Activated CD8-positive, alpha-beta T cell treated with anti-CD3 and anti-CD28 coated beads, Interleukin-2, amount 10 ng/mL, durations not matched to agents 7 days and 5 days (primary cell): ENCODE measurements at regions of chr9 and their contacts with region 1.

Region 1: GRCh38 chr9:132768932-132769905 is 99.0 kb downstream of the GTF3C4 start:
- DNase-seq: peak; percentile 81
- ATAC-seq: peak; percentile 72
- H3K4me3 Mint-ChIP-seq: peak overlapping the region; percentile 98
- H3K27ac Mint-ChIP-seq: peak overlapping the region; percentile 98
- H3K4me1 Mint-ChIP-seq: peaks cover 22% of the 10 kb centered on the region
- H3K27me3 Mint-ChIP-seq: peaks cover 14% of the 10 kb centered on the region

Region 2: DNA sequence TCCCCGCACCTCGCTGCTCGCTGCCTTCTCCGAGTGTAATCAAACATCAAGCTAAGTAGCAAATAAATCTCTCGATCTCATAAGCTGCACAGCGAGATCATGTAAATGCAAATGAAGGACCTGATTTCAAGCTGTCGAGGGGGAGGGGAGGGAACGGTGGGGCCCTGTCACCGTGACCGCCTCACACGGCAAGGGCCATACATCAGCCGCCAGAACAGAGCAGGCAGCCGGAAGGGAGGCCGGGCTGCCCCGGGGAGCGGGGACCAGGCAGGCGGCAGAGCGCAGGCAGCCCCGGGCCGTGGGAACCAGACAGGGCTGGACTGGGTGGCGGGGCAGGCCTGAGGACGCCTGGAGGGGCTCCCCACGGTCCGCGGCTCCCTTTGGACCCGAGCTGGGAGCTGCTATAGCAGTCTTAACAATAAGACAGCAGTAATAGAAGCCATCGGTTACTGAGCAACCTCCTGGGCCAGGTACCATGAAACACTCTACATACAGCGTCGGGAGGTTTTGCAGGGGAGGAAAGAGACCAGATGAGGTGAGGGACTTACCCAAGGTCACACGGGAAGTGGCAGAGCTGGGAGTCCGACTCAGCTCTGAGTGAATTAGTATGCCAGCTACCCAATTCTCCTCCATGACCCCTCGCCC is 282.4 kb before region 1 on chr9:
- CTCF ChIA-PET with region 1: no interaction called
- POLR2A ChIA-PET with region 1: interaction called, 10 read pairs
- DNase-seq: peak; percentile 79
- ATAC-seq: peak; percentile 91
- H3K4me3 Mint-ChIP-seq: peak overlapping the region; percentile 60
- H3K27ac Mint-ChIP-seq: peak overlapping the region; percentile 98
- H3K4me1 Mint-ChIP-seq: peaks cover 34% of the 10 kb centered on the region
- H3K27me3 Mint-ChIP-seq: peaks cover 48% of the 10 kb centered on the region

Region 3: DNA sequence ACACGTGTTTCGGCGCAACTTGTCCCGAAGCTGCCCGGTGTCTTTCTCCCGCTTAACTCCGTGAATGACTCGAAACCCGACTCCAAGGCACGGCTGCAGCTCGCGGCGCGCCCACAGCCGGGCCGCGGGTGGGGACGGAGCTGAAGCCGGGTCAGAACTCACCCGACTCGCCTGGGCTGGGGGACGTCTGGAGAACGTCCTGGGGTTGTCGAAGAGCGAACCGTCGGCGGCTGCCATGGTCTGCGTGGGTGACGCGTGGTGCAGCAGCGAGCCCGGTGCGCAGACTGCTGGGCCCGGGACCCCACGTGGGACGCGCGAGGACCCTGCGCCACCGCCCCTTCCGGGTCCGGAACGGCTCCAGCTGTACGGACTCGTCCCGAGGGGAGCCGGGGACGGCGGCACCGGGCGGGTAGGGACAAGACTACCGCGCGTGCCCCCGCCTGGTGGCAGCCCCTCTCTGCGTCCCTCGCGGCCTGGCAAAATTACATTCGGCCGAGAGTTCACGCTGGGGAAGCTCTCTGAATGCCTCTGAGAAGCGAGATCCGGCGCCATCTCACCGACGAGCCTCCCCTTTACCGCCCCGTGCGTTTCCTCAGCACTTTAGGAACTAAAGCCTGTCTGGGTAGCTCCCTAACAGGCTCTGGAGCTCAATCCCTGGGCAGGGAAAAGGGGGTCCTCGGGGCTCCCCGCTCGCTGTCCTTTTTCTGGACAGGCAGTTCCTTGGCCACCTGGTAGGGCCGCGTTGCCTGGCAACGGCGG is 99.3 kb before region 1 on chr9 and contains the start of gene DDX31:
- CTCF ChIA-PET with region 1: interaction called, 6 read pairs
- POLR2A ChIA-PET with region 1: interaction called, 16 read pairs
- DNase-seq: peak; percentile 87
- ATAC-seq: peak; percentile 92
- H3K4me3 Mint-ChIP-seq: peak within 1 kb of the TSS; percentile 86
- H3K27ac Mint-ChIP-seq: peak within 1 kb of the TSS; percentile 87
- H3K4me1 Mint-ChIP-seq: peaks cover 36% of the 10 kb centered on the region
- H3K27me3 Mint-ChIP-seq: no peaks in the 10 kb centered on the region
- total RNA-seq, gene DDX31: 12.6 to 13.2 TPM

Region 4: DNA sequence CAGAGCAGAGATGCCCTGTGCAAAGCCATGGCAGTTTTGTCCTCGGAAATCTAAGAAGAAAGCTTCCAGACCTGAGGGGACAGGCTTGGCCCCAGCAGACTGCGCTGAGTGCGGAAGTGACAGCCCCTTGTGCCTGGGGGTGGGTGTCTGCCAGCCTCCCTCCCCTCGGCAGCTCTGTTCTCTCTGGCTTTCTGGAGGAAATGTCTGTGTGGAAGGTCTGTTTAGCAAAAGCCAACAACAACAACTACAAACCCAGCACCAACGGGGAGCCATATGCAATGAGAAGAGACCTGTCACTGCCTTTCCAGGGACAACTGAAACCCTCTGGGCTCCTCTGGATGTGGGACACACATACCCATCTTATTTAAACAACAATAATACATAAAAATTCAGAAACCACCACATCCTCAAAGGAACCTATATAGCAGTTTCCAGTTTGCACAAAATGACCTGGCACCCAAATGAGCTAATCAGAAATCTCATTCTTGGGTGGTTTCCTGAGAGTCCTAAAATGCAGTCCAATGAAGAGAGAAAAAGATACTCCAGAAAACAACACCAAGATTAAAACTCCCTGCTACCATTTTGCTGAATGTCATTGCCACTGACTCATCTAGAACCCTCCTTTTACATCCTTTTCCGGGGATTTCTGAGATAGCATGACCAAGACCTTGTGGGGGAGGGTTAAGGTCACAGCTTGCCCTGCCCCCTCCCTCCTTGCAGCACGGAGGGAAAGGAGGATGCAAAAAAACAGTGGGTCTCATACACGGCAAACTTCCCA is 11.2 kb after region 1 on chr9:
- CTCF ChIA-PET with region 1: interaction called, 18 read pairs
- POLR2A ChIA-PET with region 1: interaction called, 16 read pairs
- DNase-seq: peak; percentile 21
- ATAC-seq: no peak
- H3K4me3 Mint-ChIP-seq: no peak overlapping the region
- H3K27ac Mint-ChIP-seq: peak overlapping the region; percentile 57
- H3K4me1 Mint-ChIP-seq: peaks cover 14% of the 10 kb centered on the region
- H3K27me3 Mint-ChIP-seq: peaks cover 27% of the 10 kb centered on the region